ENCODE measurements at regions of chr4 and their contacts with region 1.

Region 1: DNA sequence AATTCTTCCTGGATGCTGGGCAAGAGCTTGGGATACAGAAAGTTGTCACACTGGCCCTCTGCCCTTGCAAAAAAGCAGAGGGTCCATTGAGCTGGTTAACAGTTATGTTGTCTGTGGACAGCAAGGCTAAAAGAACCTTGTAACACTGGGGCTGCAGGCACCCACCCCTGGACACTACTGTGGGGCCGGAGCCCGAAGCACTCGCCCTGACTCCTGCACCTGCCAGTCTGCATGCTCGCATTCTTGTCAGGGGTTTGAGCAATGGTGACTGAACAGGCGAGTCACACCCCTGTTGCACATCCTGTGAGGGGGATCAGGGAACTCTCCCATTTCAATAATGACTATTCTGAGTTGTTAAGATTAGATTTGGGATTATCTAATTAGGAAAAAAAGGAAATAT is 23.6 kb downstream of the ADH4 start:
- DNase-seq: no peak
- H3K4me3 ChIP-seq: no peak overlapping the region
- H3K27ac ChIP-seq: no peak overlapping the region
- H3K4me1 ChIP-seq: no peaks in the 10 kb centered on the region
- H3K27me3 ChIP-seq: no peaks in the 10 kb centered on the region
- CTCF ChIP-seq: no peak

Region 2: DNA sequence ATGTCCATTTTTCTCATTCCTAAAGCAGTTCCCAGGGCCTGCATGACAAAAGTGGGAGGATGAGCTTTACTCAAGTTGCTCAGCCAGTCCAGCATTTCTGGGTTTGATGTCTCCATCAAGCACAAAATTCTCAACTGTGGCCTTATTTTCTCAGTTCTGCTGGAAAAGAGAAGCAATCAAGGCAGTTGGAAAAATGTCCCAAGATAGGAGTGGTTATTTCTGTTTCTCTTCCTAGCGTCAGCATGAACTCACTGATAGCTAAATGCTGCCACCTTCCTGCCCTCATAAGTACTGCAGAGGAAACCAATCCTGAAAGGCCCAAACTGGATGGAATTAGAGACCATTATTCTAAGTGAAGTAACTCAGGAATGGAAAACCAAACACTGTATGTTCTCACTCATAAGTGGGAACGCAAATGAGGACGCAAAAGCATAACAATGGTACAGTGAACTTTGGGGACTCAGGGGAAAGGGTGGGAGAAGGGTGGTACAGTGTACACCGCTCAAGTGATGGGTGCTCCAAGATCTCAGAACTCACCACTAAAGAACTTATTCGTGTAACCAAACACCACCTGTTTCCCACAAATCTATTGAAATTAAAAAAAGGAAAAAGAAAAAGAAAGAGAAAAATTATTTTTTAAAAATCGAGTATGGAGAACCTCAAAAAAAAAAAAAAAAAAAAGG is 285.1 kb after region 1 on chr4:
- intact Hi-C with region 1: loop called (anchors 10 kb)
- DNase-seq: peak in 4 of 5 donors; percentile 76 to 90 (median 84)
- H3K4me3 ChIP-seq: peak overlapping the region in 1 of 3 donors; percentile 30
- H3K27ac ChIP-seq: peak overlapping the region; percentile 67 to 88
- H3K4me1 ChIP-seq: peaks cover 6 to 30% (median 15%) of the 10 kb centered on the region in 3 donors
- H3K27me3 ChIP-seq: no peaks in the 10 kb centered on the region
- CTCF ChIP-seq: peak; percentile 99